ENCODE measurements at regions of chr1 and their contacts with region 1.

Region 1: DNA sequence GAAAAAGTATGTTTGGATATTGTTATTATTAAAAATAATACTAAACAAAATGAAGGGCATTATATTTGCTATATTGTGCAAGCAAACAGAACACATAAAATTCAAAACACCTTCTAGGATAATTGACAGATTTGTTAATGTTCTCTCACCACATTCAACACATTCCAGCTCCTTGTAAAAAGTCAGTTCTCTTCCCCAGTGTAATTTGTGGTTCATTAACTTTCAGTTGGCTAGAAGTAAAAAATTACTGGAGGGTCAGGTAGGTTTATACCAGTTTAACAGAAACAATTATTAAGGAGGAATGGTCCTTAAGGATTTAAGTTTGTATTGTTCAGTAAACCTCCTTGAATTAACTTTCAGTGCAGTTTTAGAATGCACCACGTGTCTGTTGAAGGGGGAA is 1235.3 kb upstream of the ADGRL2 start:
- DNase-seq: no peak
- H3K4me3 ChIP-seq: no peak overlapping the region
- H3K27ac ChIP-seq: no peak overlapping the region
- H3K4me1 ChIP-seq: no peaks in the 10 kb centered on the region
- H3K27me3 ChIP-seq: no peaks in the 10 kb centered on the region
- CTCF ChIP-seq: no peak

Region 2: GRCh38 chr1:80417631-80418030 is 147.8 kb before region 1 on chr1:
- CTCF ChIA-PET with region 1: no interaction called
- POLR2A ChIA-PET with region 1: no interaction called
- intact Hi-C with region 1: no loop called
- DNase-seq: no peak
- H3K4me3 ChIP-seq: no peak overlapping the region
- H3K27ac ChIP-seq: no peak overlapping the region
- H3K4me1 ChIP-seq: no peaks in the 10 kb centered on the region
- H3K27me3 ChIP-seq: no peaks in the 10 kb centered on the region
- CTCF ChIP-seq: no peak

Region 3: GRCh38 chr1:80582980-80583379 is 17.6 kb after region 1 on chr1:
- CTCF ChIA-PET with region 1: no interaction called
- POLR2A ChIA-PET with region 1: interaction called, 11 read pairs
- intact Hi-C with region 1: no loop called
- DNase-seq: no peak
- H3K4me3 ChIP-seq: no peak overlapping the region
- H3K27ac ChIP-seq: no peak overlapping the region
- H3K4me1 ChIP-seq: no peaks in the 10 kb centered on the region
- H3K27me3 ChIP-seq: no peaks in the 10 kb centered on the region
- CTCF ChIP-seq: no peak

Region 4: GRCh38 chr1:80759354-80759753 is 193.9 kb after region 1 on chr1:
- CTCF ChIA-PET with region 1: no interaction called
- POLR2A ChIA-PET with region 1: no interaction called
- intact Hi-C with region 1: no loop called
- DNase-seq: no peak
- H3K4me3 ChIP-seq: no peak overlapping the region
- H3K27ac ChIP-seq: no peak overlapping the region
- H3K4me1 ChIP-seq: no peaks in the 10 kb centered on the region
- H3K27me3 ChIP-seq: no peaks in the 10 kb centered on the region
- CTCF ChIP-seq: no peak